B cell (primary cell): ENCODE measurements at regions of chr16 and their contacts with region 1.

Region 1: GRCh38 chr16:71723537-71724319 is 773 bp downstream of the PHLPP2 start:
- DNase-seq: peak; percentile 94
- ATAC-seq: peak; percentile 83
- H3K4me3 ChIP-seq: peak overlapping the region; percentile 21 to 80 (median 74)
- H3K4me3 Mint-ChIP-seq: peak overlapping the region; percentile 99
- H3K27ac ChIP-seq: peak overlapping the region; percentile 52 to 85
- H3K27ac Mint-ChIP-seq: peak overlapping the region; percentile 95
- H3K4me1 ChIP-seq: peaks cover 46 to 48% of the 10 kb centered on the region in 2 donors
- H3K4me1 Mint-ChIP-seq: peaks cover 48% of the 10 kb centered on the region
- H3K27me3 ChIP-seq: no peaks in the 10 kb centered on the region
- H3K27me3 Mint-ChIP-seq: no peaks in the 10 kb centered on the region
- CTCF ChIP-seq: peak; percentile 18

Region 2: DNA sequence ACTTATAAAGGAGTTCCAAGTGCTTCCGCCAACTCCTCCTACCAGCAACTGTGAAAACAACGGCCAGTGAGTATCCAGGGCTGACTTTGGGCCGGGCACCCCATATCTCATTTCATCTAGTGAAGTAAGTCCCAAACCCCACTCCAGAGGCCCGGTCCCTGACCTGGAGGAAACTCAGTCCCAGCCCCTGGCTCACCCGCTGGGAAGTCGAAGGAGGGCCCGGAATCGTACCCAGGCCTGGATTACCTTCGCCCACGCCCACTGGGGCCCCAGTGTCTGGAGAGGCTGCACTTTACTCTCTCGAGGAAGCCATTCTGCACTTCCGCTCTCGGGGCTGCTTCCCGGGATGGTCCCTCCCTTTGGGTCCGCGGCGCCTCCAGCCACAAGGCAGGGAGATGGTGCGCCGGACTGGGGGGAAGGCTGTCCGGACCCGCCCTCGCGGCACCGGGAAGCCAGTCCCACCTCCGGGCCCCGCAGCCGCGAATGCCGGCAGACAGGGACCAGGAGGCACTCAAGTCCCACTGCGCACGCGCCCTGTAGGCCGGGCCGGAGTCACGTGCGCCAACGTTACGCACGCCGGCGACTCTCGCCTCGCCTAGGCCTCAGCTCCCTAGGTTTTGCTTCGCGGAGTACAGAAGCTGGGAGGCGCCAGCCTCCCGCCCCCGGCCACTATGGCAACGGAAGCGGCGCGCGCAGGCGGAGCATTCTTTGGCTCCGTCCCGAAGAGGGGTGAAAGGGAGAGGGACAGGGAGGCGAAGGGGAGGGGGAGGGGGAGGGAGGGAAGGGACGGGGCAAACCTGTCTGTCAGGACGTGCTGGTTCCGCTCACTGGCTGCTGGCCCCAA is 434.6 kb before region 1 on chr16 and contains the start of gene CMTR2:
- CTCF ChIA-PET with region 1: no interaction called
- POLR2A ChIA-PET with region 1: no interaction called
- intact Hi-C with region 1: loop called (anchors 10 kb)
- DNase-seq: peak; percentile 95
- ATAC-seq: peak; percentile 85
- H3K4me3 ChIP-seq: peak within 1 kb of the TSS; percentile 61 to 97 (median 67)
- H3K4me3 Mint-ChIP-seq: peak within 1 kb of the TSS; percentile 93
- H3K27ac ChIP-seq: peak within 1 kb of the TSS; percentile 84 to 94
- H3K27ac Mint-ChIP-seq: peak within 1 kb of the TSS; percentile 97
- H3K4me1 ChIP-seq: peaks cover 14 to 16% of the 10 kb centered on the region in 2 donors
- H3K4me1 Mint-ChIP-seq: peaks cover 32% of the 10 kb centered on the region
- H3K27me3 ChIP-seq: peaks cover 0 to 10% (median 5%) of the 10 kb centered on the region in 4 experiments
- H3K27me3 Mint-ChIP-seq: peaks cover 19% of the 10 kb centered on the region
- CTCF ChIP-seq: no peak
- total RNA-seq, gene CMTR2: 41.3 and 46.1 TPM in 2 replicates

Region 3: GRCh38 chr16:71746442-71747046 is 22.8 kb after region 1 on chr16:
- CTCF ChIA-PET with region 1: interaction called, 3 read pairs
- POLR2A ChIA-PET with region 1: interaction called, 5 read pairs
- intact Hi-C with region 1: loop called (anchors 2 kb)
- DNase-seq: peak; percentile 75
- ATAC-seq: peak; percentile 58
- H3K4me3 ChIP-seq: no peak overlapping the region
- H3K4me3 Mint-ChIP-seq: no peak overlapping the region
- H3K27ac ChIP-seq: no peak overlapping the region
- H3K27ac Mint-ChIP-seq: peak overlapping the region; percentile 50
- H3K4me1 ChIP-seq: no peaks in the 10 kb centered on the region
- H3K4me1 Mint-ChIP-seq: peaks cover 4% of the 10 kb centered on the region
- H3K27me3 ChIP-seq: no peaks in the 10 kb centered on the region
- H3K27me3 Mint-ChIP-seq: no peaks in the 10 kb centered on the region
- CTCF ChIP-seq: peak; percentile 85

Region 4: GRCh38 chr16:71758293-71758760 is 34.6 kb after region 1 on chr16:
- CTCF ChIA-PET with region 1: no interaction called
- POLR2A ChIA-PET with region 1: no interaction called
- intact Hi-C with region 1: no loop called
- DNase-seq: no peak
- ATAC-seq: no peak
- H3K4me3 ChIP-seq: no peak overlapping the region
- H3K4me3 Mint-ChIP-seq: no peak overlapping the region
- H3K27ac ChIP-seq: no peak overlapping the region
- H3K27ac Mint-ChIP-seq: no peak overlapping the region
- H3K4me1 ChIP-seq: no peaks in the 10 kb centered on the region
- H3K4me1 Mint-ChIP-seq: peaks cover 2% of the 10 kb centered on the region
- H3K27me3 ChIP-seq: no peaks in the 10 kb centered on the region
- H3K27me3 Mint-ChIP-seq: no peaks in the 10 kb centered on the region
- CTCF ChIP-seq: no peak

Region 5: GRCh38 chr16:71769222-71769621 is 45.5 kb after region 1 on chr16:
- CTCF ChIA-PET with region 1: no interaction called
- POLR2A ChIA-PET with region 1: no interaction called
- intact Hi-C with region 1: no loop called
- DNase-seq: no peak
- ATAC-seq: no peak
- H3K4me3 ChIP-seq: no peak overlapping the region
- H3K4me3 Mint-ChIP-seq: no peak overlapping the region
- H3K27ac ChIP-seq: no peak overlapping the region
- H3K27ac Mint-ChIP-seq: no peak overlapping the region
- H3K4me1 ChIP-seq: no peaks in the 10 kb centered on the region
- H3K4me1 Mint-ChIP-seq: no peaks in the 10 kb centered on the region
- H3K27me3 ChIP-seq: no peaks in the 10 kb centered on the region
- H3K27me3 Mint-ChIP-seq: no peaks in the 10 kb centered on the region
- CTCF ChIP-seq: no peak

Region 6: GRCh38 chr16:71845639-71846430 is 122.1 kb after region 1 on chr16 and contains the start of gene ATXN1L:
- CTCF ChIA-PET with region 1: no interaction called
- POLR2A ChIA-PET with region 1: no interaction called
- intact Hi-C with region 1: loop called (anchors 1 kb)
- DNase-seq: peak; percentile 95
- ATAC-seq: peak; percentile 87
- H3K4me3 ChIP-seq: peak within 1 kb of the TSS; percentile 63 to 99 (median 92)
- H3K4me3 Mint-ChIP-seq: peak within 1 kb of the TSS; percentile 92
- H3K27ac ChIP-seq: peak within 1 kb of the TSS; percentile 94 to 95
- H3K27ac Mint-ChIP-seq: peak within 1 kb of the TSS; percentile 98
- H3K4me1 ChIP-seq: peaks cover 29 to 52% of the 10 kb centered on the region in 2 donors
- H3K4me1 Mint-ChIP-seq: peaks cover 50% of the 10 kb centered on the region
- H3K27me3 ChIP-seq: no peaks in the 10 kb centered on the region
- H3K27me3 Mint-ChIP-seq: no peaks in the 10 kb centered on the region
- CTCF ChIP-seq: no peak
- total RNA-seq, gene ATXN1L: 38.4 and 39.5 TPM in 2 replicates

Region 7: GRCh38 chr16:71894921-71895678 is 171.4 kb after region 1 on chr16 and contains the start of gene IST1:
- CTCF ChIA-PET with region 1: no interaction called
- POLR2A ChIA-PET with region 1: no interaction called
- intact Hi-C with region 1: loop called (anchors 2 kb)
- DNase-seq: peak; percentile 98
- ATAC-seq: peak; percentile 91
- H3K4me3 ChIP-seq: peak within 1 kb of the TSS; percentile 93 to 100 (median 99)
- H3K4me3 Mint-ChIP-seq: peak within 1 kb of the TSS; percentile 97
- H3K27ac ChIP-seq: peak within 1 kb of the TSS; percentile 83 to 88
- H3K27ac Mint-ChIP-seq: peak within 1 kb of the TSS; percentile 98
- H3K4me1 ChIP-seq: peaks cover 16 to 39% of the 10 kb centered on the region in 2 donors
- H3K4me1 Mint-ChIP-seq: peaks cover 22% of the 10 kb centered on the region
- H3K27me3 ChIP-seq: no peaks in the 10 kb centered on the region
- H3K27me3 Mint-ChIP-seq: no peaks in the 10 kb centered on the region
- CTCF ChIP-seq: no peak
- total RNA-seq, gene IST1: 268 and 302 TPM in 2 replicates

Region 8: DNA sequence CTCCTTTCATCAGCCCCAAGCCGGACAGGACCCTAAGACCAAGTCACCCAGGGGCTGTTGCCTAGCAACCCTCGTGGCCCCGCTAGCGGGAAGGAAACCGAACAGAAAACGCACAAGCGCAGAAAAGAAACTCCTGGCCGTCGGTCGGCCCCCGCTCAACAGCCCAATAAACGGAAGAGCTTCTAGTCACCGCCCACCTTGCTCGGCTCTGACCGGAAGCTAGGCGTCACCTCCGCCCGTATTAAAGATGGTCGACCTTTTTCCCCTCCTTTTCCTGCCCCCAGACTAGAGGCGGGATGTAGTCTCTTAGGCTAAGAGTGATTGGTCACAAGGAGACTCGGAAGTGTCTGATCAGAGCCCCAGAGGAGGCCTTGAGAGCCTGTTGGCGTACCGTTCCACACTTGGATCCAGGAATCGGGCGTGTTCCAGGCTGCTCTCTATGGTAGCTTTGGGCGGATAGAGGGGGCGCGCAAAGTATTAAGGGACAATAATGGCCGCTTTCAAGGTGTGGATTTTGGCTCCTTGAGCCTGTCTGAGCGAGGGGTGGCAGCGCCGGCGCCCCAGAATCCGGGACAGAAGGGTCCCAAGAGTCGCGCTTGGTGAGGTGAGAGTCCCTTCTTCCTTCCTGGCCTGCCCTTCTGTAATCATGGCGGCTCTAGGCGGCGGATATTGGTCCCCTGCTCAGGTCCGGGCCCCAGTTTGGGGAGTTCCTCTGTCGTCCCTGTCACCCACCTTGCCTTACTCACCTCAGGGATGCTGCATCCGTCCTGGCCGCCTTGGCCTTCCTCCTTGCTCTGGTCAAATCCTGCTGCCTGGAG is 369.9 kb after region 1 on chr16 and contains the starts of genes DHX38 and TXNL4B:
- CTCF ChIA-PET with region 1: no interaction called
- POLR2A ChIA-PET with region 1: no interaction called
- intact Hi-C with region 1: loop called (anchors 1 kb)
- DNase-seq: peak; percentile 96
- ATAC-seq: peak; percentile 96
- H3K4me3 ChIP-seq: peak within 1 kb of the TSS; percentile 84 to 95 (median 88)
- H3K4me3 Mint-ChIP-seq: peak within 1 kb of the TSS; percentile 90
- H3K27ac ChIP-seq: peak within 1 kb of the TSS; percentile 85 to 91
- H3K27ac Mint-ChIP-seq: peak within 1 kb of the TSS; percentile 92
- H3K4me1 ChIP-seq: peaks cover 20 to 28% of the 10 kb centered on the region in 2 donors
- H3K4me1 Mint-ChIP-seq: peaks cover 42% of the 10 kb centered on the region
- H3K27me3 ChIP-seq: no peaks in the 10 kb centered on the region
- H3K27me3 Mint-ChIP-seq: no peaks in the 10 kb centered on the region
- CTCF ChIP-seq: no peak
- total RNA-seq, gene DHX38: 114 and 124 TPM in 2 replicates
- total RNA-seq, gene TXNL4B: 15.4 and 16.1 TPM in 2 replicates